Body of pancreas (tissue), 4 donors: ENCODE measurements at regions of chr6 and their contacts with region 1.

Region 1: GRCh38 chr6:47309291-47310130 is at the start of gene TNFRSF21:
- DNase-seq: peak; percentile 94 to 96 (median 95)
- ATAC-seq: peak; percentile 99
- H3K4me3 ChIP-seq: peak within 1 kb of the TSS; percentile 66
- H3K27ac ChIP-seq: peak within 1 kb of the TSS; percentile 71 to 90 (median 83)
- H3K4me1 ChIP-seq: peaks cover 16% of the 10 kb centered on the region
- H3K27me3 ChIP-seq: no peaks in the 10 kb centered on the region
- CTCF ChIP-seq: peak; percentile 91 to 99 (median 99)
- POLR2A ChIP-seq: peak; percentile 93 to 96 (median 95)
- total RNA-seq, gene TNFRSF21: 24.6 to 26.0 TPM

Region 2: GRCh38 chr6:47057830-47058540 is 251.5 kb before region 1 on chr6:
- intact Hi-C with region 1: no loop called
- DNase-seq: no peak
- ATAC-seq: no peak
- H3K4me3 ChIP-seq: no peak overlapping the region
- H3K27ac ChIP-seq: no peak overlapping the region
- H3K4me1 ChIP-seq: peaks cover 6% of the 10 kb centered on the region
- H3K27me3 ChIP-seq: no peaks in the 10 kb centered on the region
- CTCF ChIP-seq: no peak
- POLR2A ChIP-seq: no peak

Region 3: DNA sequence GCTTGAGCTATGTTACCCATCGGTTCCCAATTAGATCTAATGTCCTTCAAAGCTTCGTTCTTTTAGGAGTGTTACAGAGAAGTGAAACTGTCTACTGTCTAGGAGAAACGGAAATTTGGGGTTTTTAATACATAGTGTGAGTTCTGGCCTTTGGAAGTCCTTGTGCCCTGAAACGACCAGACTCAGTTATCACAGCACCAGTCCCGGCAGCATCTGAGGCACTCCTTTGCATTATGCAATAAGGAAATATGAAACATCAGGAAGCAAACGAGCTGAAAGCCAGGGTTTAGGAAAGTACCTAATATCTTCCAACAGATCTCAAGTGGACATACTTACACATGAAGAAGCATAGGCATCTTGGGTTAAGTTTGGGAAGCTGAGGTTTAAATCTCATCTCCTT is 205.6 kb before region 1 on chr6:
- intact Hi-C with region 1: loop called (anchors 5 kb)
- DNase-seq: peak in 1 of 4 donors; percentile 31
- ATAC-seq: no peak
- H3K4me3 ChIP-seq: no peak overlapping the region
- H3K27ac ChIP-seq: no peak overlapping the region
- H3K4me1 ChIP-seq: no peaks in the 10 kb centered on the region
- H3K27me3 ChIP-seq: no peaks in the 10 kb centered on the region
- CTCF ChIP-seq: no peak
- POLR2A ChIP-seq: no peak